Transverse colon (tissue), 4 donors: ENCODE measurements at regions of chr11 and their contacts with region 1.

Region 1: DNA sequence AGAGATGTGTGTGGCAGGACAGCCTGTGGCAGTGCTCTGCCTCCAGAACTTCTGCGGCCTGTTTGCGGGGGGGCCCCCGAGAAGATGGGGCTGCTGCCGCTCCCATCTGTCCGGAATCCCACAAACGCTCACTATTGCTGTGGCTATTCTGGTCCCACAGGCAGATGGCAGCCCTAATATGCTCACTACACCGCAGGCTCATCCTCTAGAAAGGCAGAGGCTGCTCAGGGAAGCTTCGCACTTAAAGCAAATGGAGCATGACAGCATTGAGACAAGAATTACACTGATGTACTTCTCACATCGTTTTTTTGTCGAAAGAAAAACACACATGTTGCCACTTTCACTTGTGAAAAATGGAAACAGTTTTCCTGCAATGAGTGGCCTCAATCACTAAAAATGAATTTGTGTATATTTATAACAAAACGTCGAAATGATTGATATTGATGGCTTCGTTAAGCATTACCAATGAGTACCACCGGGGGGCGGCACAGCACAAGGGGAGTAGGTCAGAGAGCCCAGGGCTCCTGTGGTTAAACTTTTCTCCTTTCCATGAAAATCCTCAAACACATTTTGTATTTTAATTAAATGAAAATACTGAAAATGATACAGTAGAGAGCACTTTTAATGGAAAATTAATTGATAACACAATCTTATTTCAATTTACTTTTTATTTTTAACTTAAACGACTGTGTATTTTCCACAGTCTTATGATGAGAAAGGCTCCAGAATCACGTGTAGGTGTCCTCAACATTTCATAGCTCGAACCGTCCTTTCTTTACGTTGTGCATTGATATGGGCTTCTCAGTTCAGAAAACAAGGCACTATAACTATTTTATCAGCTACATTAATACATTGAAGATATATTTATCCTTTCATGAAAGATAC is 69.1 kb downstream of the CTTN start:
- DNase-seq: peak; percentile 58
- H3K4me3 ChIP-seq: no peak overlapping the region
- H3K27ac ChIP-seq: no peak overlapping the region
- H3K4me1 ChIP-seq: no peaks in the 10 kb centered on the region
- H3K27me3 ChIP-seq: no peaks in the 10 kb centered on the region
- CTCF ChIP-seq: peak; percentile 80 to 89 (median 85)
- EP300 ChIP-seq: no peak
- POLR2A ChIP-seq: no peak

Region 2: DNA sequence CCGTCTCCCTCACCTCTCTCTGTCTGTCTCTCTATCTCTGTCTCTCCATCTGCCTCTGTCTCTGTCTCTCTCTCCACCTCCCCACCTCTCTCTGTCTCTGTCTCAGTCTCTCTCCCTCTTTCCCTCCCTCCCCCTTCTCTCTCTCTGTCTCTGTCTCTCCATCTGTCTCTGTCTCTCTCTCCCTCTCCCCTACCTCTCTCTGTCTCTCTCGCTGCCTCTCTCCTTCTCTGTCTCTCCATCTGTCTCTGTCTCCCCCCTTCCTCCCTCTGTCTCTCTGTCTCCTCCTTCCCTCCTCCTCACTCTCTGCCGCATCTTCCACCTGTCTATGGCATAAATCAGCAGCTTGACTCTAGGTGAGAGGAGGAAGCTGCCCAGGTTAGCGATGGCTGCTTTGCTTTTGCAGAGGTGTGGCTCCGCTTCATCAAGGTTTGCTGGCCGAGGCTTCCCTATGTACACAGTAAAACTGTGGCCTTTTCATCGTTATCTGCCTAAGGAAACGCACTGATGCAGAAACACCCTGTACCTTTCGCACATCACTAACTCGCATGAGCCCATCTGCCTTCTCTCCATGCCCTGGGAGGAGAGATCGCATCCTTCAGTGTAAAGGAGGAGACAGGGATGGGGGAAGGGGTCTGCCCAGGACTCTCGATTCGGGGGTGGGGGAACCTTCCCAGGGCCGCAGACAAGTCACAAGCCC is 344.8 kb before region 1 on chr11:
- in situ Hi-C with region 1: no loop called
- intact Hi-C with region 1: no loop called
- DNase-seq: no peak
- H3K4me3 ChIP-seq: no peak overlapping the region
- H3K27ac ChIP-seq: no peak overlapping the region
- H3K4me1 ChIP-seq: no peaks in the 10 kb centered on the region
- H3K27me3 ChIP-seq: no peaks in the 10 kb centered on the region
- CTCF ChIP-seq: no peak
- EP300 ChIP-seq: no peak
- POLR2A ChIP-seq: no peak

Region 3: DNA sequence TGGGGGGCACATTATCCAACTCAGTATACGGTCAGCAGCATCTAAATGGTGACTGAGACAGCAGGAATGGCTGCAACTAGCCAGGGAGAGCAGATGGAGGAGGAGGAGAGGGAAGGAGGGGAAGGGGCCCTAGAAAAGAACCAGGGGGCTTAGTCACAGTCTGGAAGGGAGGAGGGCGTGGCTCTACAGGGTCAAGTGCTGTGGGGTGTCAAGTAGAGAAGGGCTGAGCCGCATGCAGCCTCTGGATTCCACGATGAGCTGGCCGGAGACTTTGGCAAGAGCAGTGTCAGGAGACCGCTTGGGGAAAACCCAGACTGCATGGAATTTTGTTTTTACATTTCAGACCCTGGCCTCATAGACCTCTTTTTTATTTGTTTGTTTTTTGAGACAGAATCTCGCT is 222.7 kb before region 1 on chr11:
- in situ Hi-C with region 1: no loop called
- intact Hi-C with region 1: no loop called
- DNase-seq: no peak
- H3K4me3 ChIP-seq: no peak overlapping the region
- H3K27ac ChIP-seq: no peak overlapping the region
- H3K4me1 ChIP-seq: no peaks in the 10 kb centered on the region
- H3K27me3 ChIP-seq: no peaks in the 10 kb centered on the region
- CTCF ChIP-seq: no peak
- EP300 ChIP-seq: no peak
- POLR2A ChIP-seq: no peak

Region 4: DNA sequence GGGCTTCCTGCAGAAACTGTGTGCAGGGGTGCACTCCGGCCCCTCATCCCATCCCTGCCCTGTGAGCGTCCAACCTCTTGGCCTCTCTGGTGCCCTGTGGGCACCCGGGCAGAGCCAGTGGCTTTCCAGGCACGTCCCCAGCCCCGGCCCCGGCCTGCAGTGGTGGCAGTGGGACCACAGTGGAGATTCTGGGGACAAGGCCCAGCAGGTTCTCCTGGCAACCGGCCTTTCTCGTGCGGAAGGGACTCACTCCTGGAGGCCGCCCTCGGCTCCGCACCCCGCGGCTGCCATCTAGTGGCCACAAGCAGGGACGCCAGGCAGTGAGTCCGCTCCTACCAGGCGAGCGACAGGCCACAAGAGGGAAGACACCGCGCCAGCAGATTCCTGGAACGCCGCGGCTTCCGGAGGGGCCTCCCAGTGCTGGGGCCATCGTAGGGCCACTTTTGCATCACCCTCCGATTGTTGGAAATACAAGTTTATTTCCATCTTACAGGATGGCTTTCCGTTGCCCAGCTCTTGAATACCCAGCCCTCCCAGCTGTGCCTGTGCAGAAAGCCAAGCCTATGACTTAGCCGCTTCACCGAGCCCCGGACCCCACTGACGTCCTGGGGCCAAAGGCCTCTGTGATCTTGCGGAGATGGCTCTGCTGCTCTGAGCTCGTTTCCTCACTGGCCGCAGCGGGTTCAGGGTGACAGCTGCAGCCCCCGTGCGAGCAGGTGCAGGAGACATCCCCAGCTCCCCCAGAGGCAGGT is 288.1 kb after region 1 on chr11:
- in situ Hi-C with region 1: loop called (anchors 5 to 10 kb)
- intact Hi-C with region 1: loop called (anchors 5 kb)
- DNase-seq: peak; percentile 77
- H3K4me3 ChIP-seq: no peak overlapping the region
- H3K27ac ChIP-seq: no peak overlapping the region
- H3K4me1 ChIP-seq: no peaks in the 10 kb centered on the region
- H3K27me3 ChIP-seq: no peaks in the 10 kb centered on the region
- CTCF ChIP-seq: peak; percentile 94 to 98 (median 96)
- EP300 ChIP-seq: no peak
- POLR2A ChIP-seq: no peak